ENCODE measurements at regions of chr11 and their contacts with region 1.

Region 1: GRCh38 chr11:111756097-111756496 is 10.1 kb downstream of the PPP2R1B start:
- DNase-seq: no peak
- ATAC-seq: no peak
- H3K4me3 ChIP-seq: no peak overlapping the region
- H3K27ac ChIP-seq: no peak overlapping the region
- H3K4me1 ChIP-seq: peaks cover 0 to 30% (median 22%) of the 10 kb centered on the region in 9 donors
- H3K27me3 ChIP-seq: no peaks in the 10 kb centered on the region
- CTCF ChIP-seq: no peak

Region 2: GRCh38 chr11:111741751-111742150 is 14.3 kb before region 1 on chr11:
- intact Hi-C with region 1: loop called in 1 of 10 experiments (anchors 2 kb)
- DNase-seq: no peak
- ATAC-seq: peak in 1 of 8 donors; percentile 27
- H3K4me3 ChIP-seq: no peak overlapping the region
- H3K27ac ChIP-seq: peak overlapping the region in 1 of 10 donors; percentile 10
- H3K4me1 ChIP-seq: peaks cover 16 to 32% (median 26%) of the 10 kb centered on the region in 9 donors
- H3K27me3 ChIP-seq: no peaks in the 10 kb centered on the region
- CTCF ChIP-seq: no peak

Measured in heart right ventricle (tissue), 16 donors.